ENCODE measurements at regions of chr15 and their contacts with region 1.

Region 1: GRCh38 chr15:78308422-78309032 is 9.1 kb upstream of the SKIC8 start:
- DNase-seq: peak in 12 of 14 experiments; percentile 6 to 61 (median 28)
- ATAC-seq: peak; percentile 68
- H3K4me3 ChIP-seq: no peak overlapping the region
- H3K4me3 Mint-ChIP-seq: no peak overlapping the region
- H3K27ac ChIP-seq: no peak overlapping the region
- H3K27ac Mint-ChIP-seq: no peak overlapping the region
- H3K4me1 ChIP-seq: no peaks in the 10 kb centered on the region
- H3K4me1 Mint-ChIP-seq: no peaks in the 10 kb centered on the region
- H3K27me3 ChIP-seq: peaks cover 0 to 9% of the 10 kb centered on the region in 2 experiments
- H3K27me3 Mint-ChIP-seq: peaks cover 13% of the 10 kb centered on the region
- CTCF ChIP-seq: no peak

Region 2: DNA sequence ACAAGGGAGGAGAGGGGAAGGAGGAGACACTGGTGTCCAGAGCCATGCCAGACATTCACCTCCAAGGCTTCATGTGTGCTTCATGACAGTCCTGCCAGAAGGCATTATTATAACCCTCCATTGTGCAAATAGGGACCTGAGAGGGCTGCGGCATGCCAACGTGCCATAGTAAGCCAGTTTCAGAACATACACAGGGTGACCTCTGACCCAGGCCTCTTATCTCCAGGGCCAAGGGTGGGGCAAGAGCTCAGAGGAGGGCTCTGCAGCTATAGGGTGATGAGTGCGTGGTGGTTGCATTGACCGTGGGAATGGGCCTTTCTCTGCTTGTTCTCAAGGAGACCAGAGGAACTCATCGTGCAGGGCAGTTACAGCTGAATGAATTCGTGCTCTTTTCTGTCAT is 64.4 kb before region 1 on chr15:
- CTCF ChIA-PET with region 1: no interaction called
- POLR2A ChIA-PET with region 1: no interaction called
- intact Hi-C with region 1: no loop called
- DNase-seq: no peak
- ATAC-seq: no peak
- H3K4me3 ChIP-seq: no peak overlapping the region
- H3K4me3 Mint-ChIP-seq: no peak overlapping the region
- H3K27ac ChIP-seq: no peak overlapping the region
- H3K27ac Mint-ChIP-seq: no peak overlapping the region
- H3K4me1 ChIP-seq: peaks cover 5% of the 10 kb centered on the region
- H3K4me1 Mint-ChIP-seq: peaks cover 4% of the 10 kb centered on the region
- H3K27me3 ChIP-seq: no peaks in the 10 kb centered on the region
- H3K27me3 Mint-ChIP-seq: no peaks in the 10 kb centered on the region
- CTCF ChIP-seq: no peak

Region 3: DNA sequence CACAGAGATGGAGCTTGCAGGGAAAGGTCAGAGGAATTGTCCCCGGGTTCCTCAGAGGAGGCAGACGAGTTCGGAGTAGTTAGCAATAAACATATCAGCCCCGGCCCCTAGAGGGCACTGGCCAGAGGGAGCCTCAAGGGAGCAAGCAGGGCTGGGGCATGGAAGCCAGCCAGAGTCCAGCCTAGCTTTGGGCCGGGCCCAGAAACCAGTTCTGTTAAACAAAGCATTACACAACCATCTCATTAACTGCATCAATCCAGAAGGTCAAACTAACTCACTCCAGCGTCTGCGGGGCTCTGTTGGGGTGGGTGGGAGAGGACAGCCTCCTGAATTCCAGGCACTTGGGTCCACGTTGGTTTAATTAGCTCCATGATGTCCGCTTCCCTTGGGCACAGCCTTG is 88.4 kb after region 1 on chr15:
- CTCF ChIA-PET with region 1: no interaction called
- POLR2A ChIA-PET with region 1: no interaction called
- intact Hi-C with region 1: no loop called
- DNase-seq: no peak
- ATAC-seq: no peak
- H3K4me3 ChIP-seq: no peak overlapping the region
- H3K4me3 Mint-ChIP-seq: no peak overlapping the region
- H3K27ac ChIP-seq: no peak overlapping the region
- H3K27ac Mint-ChIP-seq: no peak overlapping the region
- H3K4me1 ChIP-seq: no peaks in the 10 kb centered on the region
- H3K4me1 Mint-ChIP-seq: no peaks in the 10 kb centered on the region
- H3K27me3 ChIP-seq: no peaks in the 10 kb centered on the region
- H3K27me3 Mint-ChIP-seq: peaks cover 3% of the 10 kb centered on the region
- CTCF ChIP-seq: no peak

Region 4: DNA sequence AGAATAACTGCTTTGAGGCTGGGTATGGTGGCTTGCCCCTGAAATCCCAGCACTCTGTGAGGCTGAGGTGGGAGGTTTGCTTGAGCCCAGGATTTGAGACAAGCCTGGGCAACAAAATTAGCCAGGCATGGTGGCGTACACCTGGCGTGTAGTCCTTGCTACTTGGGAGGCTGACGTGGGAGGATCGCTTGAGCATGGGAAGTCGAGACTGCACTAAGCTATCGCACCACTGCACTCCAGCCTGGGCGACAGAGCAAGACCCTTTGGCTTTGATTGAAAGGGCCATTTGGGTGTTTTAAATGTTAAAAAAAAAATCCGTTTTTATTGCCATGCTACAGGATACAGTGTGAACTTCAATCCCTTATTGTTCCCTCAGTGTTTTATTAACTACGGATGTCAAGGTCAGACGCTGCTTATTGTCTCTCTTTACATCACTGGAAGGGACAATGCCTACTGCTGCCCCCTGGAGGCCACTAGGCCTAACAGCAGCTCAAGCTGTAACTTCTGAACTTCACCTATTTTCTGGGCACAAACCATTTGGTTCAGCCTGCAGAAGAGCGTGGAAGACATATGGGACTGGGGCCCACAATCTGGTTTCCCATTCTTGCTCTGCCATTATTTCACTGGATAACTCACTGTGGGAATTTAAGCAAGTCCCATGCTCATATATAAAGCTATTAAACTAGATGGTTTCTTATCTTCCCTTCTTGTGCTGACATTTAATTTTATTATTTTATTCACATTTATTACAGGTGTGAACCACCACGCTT is 114.2 kb after region 1 on chr15:
- CTCF ChIA-PET with region 1: interaction called, 3 read pairs
- POLR2A ChIA-PET with region 1: no interaction called
- intact Hi-C with region 1: loop called in 1 of 2 experiments (anchors 5 kb)
- DNase-seq: peak; percentile 43 to 80 (median 54)
- ATAC-seq: peak; percentile 86
- H3K4me3 ChIP-seq: no peak overlapping the region
- H3K4me3 Mint-ChIP-seq: no peak overlapping the region
- H3K27ac ChIP-seq: no peak overlapping the region
- H3K27ac Mint-ChIP-seq: no peak overlapping the region
- H3K4me1 ChIP-seq: peaks cover 7% of the 10 kb centered on the region
- H3K4me1 Mint-ChIP-seq: peaks cover 20% of the 10 kb centered on the region
- H3K27me3 ChIP-seq: peaks cover 0 to 2% of the 10 kb centered on the region in 2 experiments
- H3K27me3 Mint-ChIP-seq: peaks cover 9% of the 10 kb centered on the region
- CTCF ChIP-seq: peak; percentile 93

Region 5: DNA sequence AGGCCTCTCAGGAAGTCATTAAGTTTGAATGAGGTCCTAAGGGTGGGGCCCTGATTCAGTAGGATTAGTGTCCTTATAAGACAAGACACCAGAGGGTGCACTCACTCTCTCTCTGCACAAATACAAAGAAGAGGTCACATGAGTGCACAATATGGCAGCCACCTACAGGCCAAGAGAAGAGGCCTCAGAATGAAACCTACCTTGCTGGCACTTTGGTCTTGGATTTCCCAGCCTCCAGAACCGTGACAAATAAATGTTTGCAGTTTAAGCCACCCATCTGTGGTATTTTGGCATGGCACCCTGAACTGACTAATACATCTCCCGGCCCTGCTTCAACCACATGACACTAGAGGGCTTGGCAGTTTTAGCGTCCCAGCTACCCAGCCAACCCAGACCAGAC is 406.4 kb after region 1 on chr15:
- CTCF ChIA-PET with region 1: no interaction called
- POLR2A ChIA-PET with region 1: no interaction called
- intact Hi-C with region 1: loop called in 1 of 2 experiments (anchors 10 kb)
- DNase-seq: no peak
- ATAC-seq: no peak
- H3K4me3 ChIP-seq: no peak overlapping the region
- H3K4me3 Mint-ChIP-seq: no peak overlapping the region
- H3K27ac ChIP-seq: no peak overlapping the region
- H3K27ac Mint-ChIP-seq: no peak overlapping the region
- H3K4me1 ChIP-seq: no peaks in the 10 kb centered on the region
- H3K4me1 Mint-ChIP-seq: no peaks in the 10 kb centered on the region
- H3K27me3 ChIP-seq: peaks cover 4 to 10% of the 10 kb centered on the region in 2 experiments
- H3K27me3 Mint-ChIP-seq: peaks cover 40% of the 10 kb centered on the region
- CTCF ChIP-seq: no peak

Measured in CD4-positive, alpha-beta T cell (primary cell).